Activated T-helper 1 cell treated with anti-CD3 and anti-CD28 coated beads, Interleukin-12 subunit alpha, Interleukin-12 subunit beta, Interleukin-2, Interleukin-4 antibody, amounts not matched to agents 30 ng/mL and 10 ng/mL and 1 ng/mL, durations not matched to agents 14 hours and 24 hours and 36 hours (primary cell): ENCODE measurements at regions of chr5 and their contacts with region 1.

Region 1: DNA sequence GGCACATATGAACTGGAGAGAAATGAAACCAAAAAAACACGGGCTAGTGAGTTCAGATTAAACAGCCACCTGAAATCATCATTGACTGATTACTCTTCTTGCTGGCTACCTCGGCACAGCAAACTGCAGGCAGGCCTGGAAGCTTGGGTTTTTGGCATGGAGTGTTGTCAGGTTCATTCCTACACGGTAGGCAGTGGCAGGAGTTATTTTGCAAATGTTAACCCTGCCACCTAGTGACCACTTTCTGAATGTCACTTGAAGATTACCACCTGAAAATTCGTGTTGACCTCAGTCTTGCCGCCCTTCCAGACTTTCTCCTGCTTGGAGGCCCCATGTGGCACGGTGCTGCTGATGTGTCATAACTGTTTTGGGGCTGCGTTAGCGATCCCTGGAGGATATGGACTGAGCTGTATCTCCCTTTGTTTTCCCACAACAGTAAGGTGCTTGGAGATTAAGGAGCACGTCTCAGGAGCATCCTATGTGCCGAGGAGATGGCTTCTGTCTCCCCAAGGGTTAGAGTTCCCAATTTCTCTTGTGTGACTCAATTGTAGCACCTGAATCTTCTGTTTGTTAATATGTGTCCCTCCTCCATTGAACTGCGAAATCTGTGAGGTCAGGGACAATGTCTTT is 12.7 kb upstream of the CD180 start:
- DNase-seq: peak; percentile 62
- H3K4me3 Mint-ChIP-seq: peak overlapping the region; percentile 25
- H3K27ac Mint-ChIP-seq: no peak overlapping the region
- H3K4me1 Mint-ChIP-seq: peaks cover 59% of the 10 kb centered on the region
- H3K27me3 Mint-ChIP-seq: no peaks in the 10 kb centered on the region

Region 2: GRCh38 chr5:66306105-66306843 is 903.0 kb before region 1 on chr5:
- intact Hi-C with region 1: loop called (anchors 1 kb)
- DNase-seq: no peak
- H3K4me3 Mint-ChIP-seq: no peak overlapping the region
- H3K27ac Mint-ChIP-seq: no peak overlapping the region
- H3K4me1 Mint-ChIP-seq: peaks cover 5% of the 10 kb centered on the region
- H3K27me3 Mint-ChIP-seq: peaks cover 12% of the 10 kb centered on the region

Region 3: DNA sequence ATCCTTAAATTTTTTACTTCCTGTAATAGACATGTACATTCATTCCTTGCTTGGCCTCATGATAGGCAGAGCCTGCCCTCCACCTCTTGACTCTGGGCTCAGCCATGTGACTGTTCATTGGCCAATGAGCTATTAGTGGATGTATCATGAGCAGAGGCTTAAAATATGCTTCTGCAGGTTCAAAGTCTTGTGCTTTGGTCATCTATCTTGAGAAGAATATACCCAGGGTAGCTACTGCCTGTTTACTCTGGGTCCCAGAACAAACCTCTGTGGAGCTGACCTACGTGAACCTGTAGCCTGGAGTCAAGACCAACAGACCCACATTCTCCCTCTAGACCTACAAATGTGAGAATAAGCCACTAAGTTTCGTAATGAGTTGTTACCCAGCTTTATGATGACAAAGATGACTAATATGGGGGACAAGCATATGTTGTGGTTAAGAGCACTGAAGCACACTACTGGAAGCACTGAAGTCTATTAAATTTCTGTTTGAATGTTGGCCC is 368.7 kb before region 1 on chr5:
- intact Hi-C with region 1: loop called (anchors 1 kb)
- DNase-seq: peak; percentile 53
- H3K4me3 Mint-ChIP-seq: peak overlapping the region; percentile 38
- H3K27ac Mint-ChIP-seq: peak overlapping the region; percentile 81
- H3K4me1 Mint-ChIP-seq: peaks cover 81% of the 10 kb centered on the region
- H3K27me3 Mint-ChIP-seq: no peaks in the 10 kb centered on the region

Region 4: DNA sequence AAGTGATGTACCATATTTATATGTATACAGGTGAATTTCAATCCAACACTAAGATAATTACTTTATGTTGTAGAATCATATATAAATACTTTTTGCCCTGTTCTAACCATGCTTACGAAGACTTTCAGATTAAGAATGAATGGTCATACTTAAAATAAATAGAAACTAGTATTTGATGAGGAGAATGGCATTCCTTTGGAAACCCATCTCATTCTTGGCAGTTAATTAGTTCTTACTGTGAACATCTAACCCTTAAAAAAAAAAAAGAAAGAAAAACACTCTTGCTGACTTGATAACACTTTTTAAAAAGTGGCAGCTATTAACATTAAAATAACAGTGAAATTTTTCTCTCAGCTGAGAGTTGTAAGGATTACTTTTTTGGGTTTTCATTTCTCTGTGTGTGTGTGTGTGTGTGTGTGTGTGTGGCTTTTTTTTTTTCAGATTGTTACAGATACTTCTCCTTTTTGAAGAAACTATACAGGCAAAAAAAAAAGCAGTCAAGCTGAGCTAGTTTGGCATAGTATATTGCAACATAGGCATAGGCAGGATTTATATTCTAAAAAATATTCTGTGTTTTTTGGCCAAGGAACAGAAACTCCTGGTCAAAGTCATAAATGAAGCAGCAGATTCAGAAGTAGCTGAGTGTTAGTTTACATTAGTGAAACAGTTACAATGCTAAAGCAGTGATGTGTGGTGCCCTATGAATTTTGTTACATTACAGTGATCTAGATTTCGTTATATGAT is 176.2 kb before region 1 on chr5:
- intact Hi-C with region 1: loop called (anchors 2 kb)
- DNase-seq: no peak
- H3K4me3 Mint-ChIP-seq: no peak overlapping the region
- H3K27ac Mint-ChIP-seq: peak overlapping the region; percentile 10
- H3K4me1 Mint-ChIP-seq: peaks cover 76% of the 10 kb centered on the region
- H3K27me3 Mint-ChIP-seq: no peaks in the 10 kb centered on the region

Region 5: DNA sequence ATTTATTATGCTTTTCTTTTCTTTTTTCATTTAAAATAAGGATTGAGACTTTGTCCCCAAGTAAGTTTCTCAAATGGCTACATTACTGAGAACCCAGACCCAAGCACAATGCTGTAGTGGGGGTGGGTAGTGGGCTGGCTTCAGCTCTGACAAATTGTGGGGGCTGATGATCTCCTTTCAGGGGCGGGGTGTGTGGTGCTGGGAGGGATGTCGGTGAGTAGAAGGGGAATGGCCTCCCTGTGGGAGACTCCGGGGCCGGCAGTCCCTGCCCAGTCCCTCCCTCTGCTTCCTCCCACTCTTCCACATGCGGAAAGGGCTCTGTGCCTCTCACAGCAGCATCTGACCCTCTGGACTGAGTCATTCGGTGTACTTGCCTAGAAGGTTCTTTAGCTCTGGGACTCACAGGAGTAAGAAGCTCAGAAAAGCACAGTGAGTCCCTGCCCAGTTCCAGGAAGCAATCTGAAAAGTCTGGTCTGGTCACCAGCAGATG is 26.9 kb before region 1 on chr5:
- intact Hi-C with region 1: loop called (anchors 2 kb)
- DNase-seq: no peak
- H3K4me3 Mint-ChIP-seq: peak overlapping the region; percentile 42
- H3K27ac Mint-ChIP-seq: peak overlapping the region; percentile 86
- H3K4me1 Mint-ChIP-seq: peaks cover 75% of the 10 kb centered on the region
- H3K27me3 Mint-ChIP-seq: no peaks in the 10 kb centered on the region

Region 6: GRCh38 chr5:68433923-68434879 is 1224.9 kb after region 1 on chr5:
- intact Hi-C with region 1: loop called (anchors 2 kb)
- DNase-seq: peak; percentile 88
- H3K4me3 Mint-ChIP-seq: peak overlapping the region; percentile 16
- H3K27ac Mint-ChIP-seq: peak overlapping the region; percentile 88
- H3K4me1 Mint-ChIP-seq: peaks cover 53% of the 10 kb centered on the region
- H3K27me3 Mint-ChIP-seq: peaks cover 30% of the 10 kb centered on the region